Heart left ventricle (tissue), 16 donors: ENCODE measurements at regions of chr10 and their contacts with region 1.

Region 1: GRCh38 chr10:125719146-125720001 is at the start of gene EDRF1:
- DNase-seq: peak; percentile 99 to 100 (median 99)
- ATAC-seq: peak; percentile 100
- H3K4me3 ChIP-seq: peak within 1 kb of the TSS; percentile 76 to 99 (median 95)
- H3K27ac ChIP-seq: peak within 1 kb of the TSS; percentile 54 to 93 (median 86)
- H3K4me1 ChIP-seq: peaks cover 3 to 24% (median 13%) of the 10 kb centered on the region in 12 donors
- H3K27me3 ChIP-seq: no peaks in the 10 kb centered on the region
- CTCF ChIP-seq: no peak
- POLR2A ChIP-seq: peak in 1 of 2 donors; percentile 89
- total RNA-seq, gene EDRF1: 6.9 to 13.9 (median 9.8) TPM

Region 2: GRCh38 chr10:124802313-124802675 is 917.1 kb before region 1 on chr10:
- intact Hi-C with region 1: loop called in 1 of 10 experiments (anchors 10 kb)
- DNase-seq: no peak
- ATAC-seq: peak in 1 of 4 donors; percentile 6
- H3K4me3 ChIP-seq: peak overlapping the region; percentile 67 to 100 (median 89)
- H3K27ac ChIP-seq: peak overlapping the region in 10 of 12 donors; percentile 57 to 90 (median 86)
- H3K4me1 ChIP-seq: peaks cover 0 to 18% (median 11%) of the 10 kb centered on the region in 12 donors
- H3K27me3 ChIP-seq: no peaks in the 10 kb centered on the region
- CTCF ChIP-seq: no peak
- POLR2A ChIP-seq: no peak

Region 3: GRCh38 chr10:125462845-125463244 is 256.5 kb before region 1 on chr10:
- intact Hi-C with region 1: no loop called
- DNase-seq: no peak
- ATAC-seq: no peak
- H3K4me3 ChIP-seq: no peak overlapping the region
- H3K27ac ChIP-seq: no peak overlapping the region
- H3K4me1 ChIP-seq: no peaks in the 10 kb centered on the region
- H3K27me3 ChIP-seq: peaks cover 0 to 12% (median 0%) of the 10 kb centered on the region in 9 donors
- CTCF ChIP-seq: no peak
- POLR2A ChIP-seq: no peak